ENCODE measurements at regions of chr6 and their contacts with region 1.

Region 1: GRCh38 chr6:90274451-90275030 is 22.1 kb downstream of the BACH2 start:
- DNase-seq: peak; percentile 86
- H3K4me3 Mint-ChIP-seq: peak overlapping the region; percentile 32
- H3K27ac Mint-ChIP-seq: peak overlapping the region; percentile 58
- H3K4me1 Mint-ChIP-seq: peaks cover 51% of the 10 kb centered on the region
- H3K27me3 Mint-ChIP-seq: peaks cover 10% of the 10 kb centered on the region

Region 2: DNA sequence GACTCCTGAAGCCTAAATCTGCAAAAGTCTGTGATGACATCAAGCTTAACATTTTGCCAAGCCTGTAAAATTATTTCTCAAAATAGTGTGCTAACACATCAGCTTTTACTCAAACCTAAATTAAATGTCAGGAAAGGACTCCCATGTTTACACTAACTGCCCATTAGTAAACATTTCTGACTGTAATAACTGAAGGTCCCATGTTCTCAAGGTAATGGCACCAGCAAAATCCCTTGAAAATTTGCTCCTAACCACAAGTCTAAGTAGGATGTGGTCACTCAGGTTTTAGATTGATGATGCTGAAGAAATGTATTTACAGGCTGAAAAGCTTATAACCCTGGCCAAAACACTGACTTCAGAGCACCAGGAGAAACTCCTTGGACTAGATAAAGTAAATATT is 10.9 kb before region 1 on chr6:
- CTCF ChIA-PET with region 1: interaction called, 5 read pairs
- POLR2A ChIA-PET with region 1: interaction called, 10 read pairs
- DNase-seq: no peak
- H3K4me3 Mint-ChIP-seq: no peak overlapping the region
- H3K27ac Mint-ChIP-seq: no peak overlapping the region
- H3K4me1 Mint-ChIP-seq: peaks cover 35% of the 10 kb centered on the region
- H3K27me3 Mint-ChIP-seq: no peaks in the 10 kb centered on the region

Measured in activated CD4-positive, alpha-beta memory T cell treated with anti-CD3 and anti-CD28 coated beads, Interleukin-2, amount 10 ng/mL, durations not matched to agents 7 days and 5 days (primary cell).